Right ventricle myocardium inferior (tissue), 1 donor: ENCODE measurements at regions of chr18 and their contacts with region 1.

Region 1: GRCh38 chr18:3245853-3246634 is 1.6 kb upstream of the MYL12A start:
- DNase-seq: peak; percentile 95
- ATAC-seq: peak; percentile 77

Region 2: GRCh38 chr18:2932247-2933181 is 313.5 kb before region 1 on chr18:
- intact Hi-C with region 1: loop called (anchors 2 kb)
- DNase-seq: no peak
- ATAC-seq: no peak

Region 3: DNA sequence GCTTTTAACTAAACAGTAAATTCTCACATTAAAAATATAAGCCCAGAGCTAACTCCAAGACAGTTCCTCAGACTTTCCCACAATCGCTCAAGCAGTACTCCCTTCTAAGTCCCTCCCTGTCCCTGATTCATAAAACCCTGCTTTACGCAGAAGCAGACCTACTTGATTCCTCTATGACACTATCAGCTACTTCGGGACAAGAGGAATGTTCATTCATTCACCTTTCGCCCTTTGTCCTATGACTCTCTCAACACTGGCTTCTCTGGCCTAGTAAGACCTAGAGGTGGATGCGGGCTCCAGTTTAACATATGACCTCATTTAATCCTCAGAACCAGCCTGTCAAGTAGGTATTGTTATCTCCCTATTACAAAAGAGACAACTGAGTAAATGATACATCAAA is 243.3 kb before region 1 on chr18:
- intact Hi-C with region 1: no loop called
- DNase-seq: no peak
- ATAC-seq: no peak

Region 4: GRCh38 chr18:3012964-3013804 is 232.9 kb before region 1 on chr18 and contains the start of gene LPIN2:
- intact Hi-C with region 1: loop called (anchors 2 kb)
- DNase-seq: peak; percentile 100
- ATAC-seq: peak; percentile 91
- total RNA-seq, gene LPIN2: 9.9 TPM

Region 5: DNA sequence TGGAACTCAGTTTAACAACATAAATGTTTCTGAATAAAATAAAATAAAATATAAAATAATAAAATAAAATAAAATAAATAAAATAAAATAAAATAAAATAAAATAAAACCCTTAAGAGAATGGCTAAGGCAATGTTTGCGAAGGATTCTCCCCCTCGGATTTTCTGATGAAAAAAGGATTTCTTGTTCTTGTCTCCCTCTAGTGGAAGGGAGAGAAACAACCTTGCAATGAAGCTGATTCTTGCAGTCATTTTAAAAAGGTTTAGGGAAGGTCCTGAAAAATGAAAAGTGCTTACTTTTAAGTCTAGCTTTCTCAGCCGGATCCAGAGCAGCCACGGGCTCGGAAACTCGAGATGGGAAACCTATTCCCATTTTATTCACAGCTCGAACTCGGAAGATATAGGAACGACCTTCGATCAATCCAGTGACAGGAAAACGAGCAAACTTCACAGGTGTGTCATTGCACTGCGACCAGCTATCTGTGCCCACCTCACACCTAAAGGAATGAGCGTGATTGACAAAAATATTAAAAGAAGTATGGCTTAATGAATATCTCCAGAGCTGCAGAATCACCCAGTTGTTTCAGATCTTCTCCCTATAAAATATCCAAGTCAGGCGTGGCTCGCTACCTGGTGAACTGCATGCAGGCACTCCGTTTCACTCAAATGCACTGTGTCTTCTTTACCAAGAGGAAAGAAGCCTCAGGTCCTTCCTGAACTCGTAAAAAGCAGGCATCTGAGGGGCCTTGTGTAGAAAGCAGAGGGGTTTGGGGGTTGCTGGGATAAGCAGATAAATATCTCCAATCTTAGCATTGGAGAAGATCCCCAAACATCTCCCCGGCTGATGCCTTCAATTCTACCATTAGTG is 94.4 kb before region 1 on chr18:
- intact Hi-C with region 1: loop called (anchors 5 kb)
- DNase-seq: no peak
- ATAC-seq: no peak

Region 6: GRCh38 chr18:3186678-3187658 is 59.1 kb before region 1 on chr18:
- intact Hi-C with region 1: loop called (anchors 2 kb)
- DNase-seq: no peak
- ATAC-seq: no peak

Region 7: GRCh38 chr18:3217948-3218647 is 27.9 kb before region 1 on chr18:
- intact Hi-C with region 1: loop called (anchors 2 kb)
- DNase-seq: no peak
- ATAC-seq: peak; percentile 58

Region 8: DNA sequence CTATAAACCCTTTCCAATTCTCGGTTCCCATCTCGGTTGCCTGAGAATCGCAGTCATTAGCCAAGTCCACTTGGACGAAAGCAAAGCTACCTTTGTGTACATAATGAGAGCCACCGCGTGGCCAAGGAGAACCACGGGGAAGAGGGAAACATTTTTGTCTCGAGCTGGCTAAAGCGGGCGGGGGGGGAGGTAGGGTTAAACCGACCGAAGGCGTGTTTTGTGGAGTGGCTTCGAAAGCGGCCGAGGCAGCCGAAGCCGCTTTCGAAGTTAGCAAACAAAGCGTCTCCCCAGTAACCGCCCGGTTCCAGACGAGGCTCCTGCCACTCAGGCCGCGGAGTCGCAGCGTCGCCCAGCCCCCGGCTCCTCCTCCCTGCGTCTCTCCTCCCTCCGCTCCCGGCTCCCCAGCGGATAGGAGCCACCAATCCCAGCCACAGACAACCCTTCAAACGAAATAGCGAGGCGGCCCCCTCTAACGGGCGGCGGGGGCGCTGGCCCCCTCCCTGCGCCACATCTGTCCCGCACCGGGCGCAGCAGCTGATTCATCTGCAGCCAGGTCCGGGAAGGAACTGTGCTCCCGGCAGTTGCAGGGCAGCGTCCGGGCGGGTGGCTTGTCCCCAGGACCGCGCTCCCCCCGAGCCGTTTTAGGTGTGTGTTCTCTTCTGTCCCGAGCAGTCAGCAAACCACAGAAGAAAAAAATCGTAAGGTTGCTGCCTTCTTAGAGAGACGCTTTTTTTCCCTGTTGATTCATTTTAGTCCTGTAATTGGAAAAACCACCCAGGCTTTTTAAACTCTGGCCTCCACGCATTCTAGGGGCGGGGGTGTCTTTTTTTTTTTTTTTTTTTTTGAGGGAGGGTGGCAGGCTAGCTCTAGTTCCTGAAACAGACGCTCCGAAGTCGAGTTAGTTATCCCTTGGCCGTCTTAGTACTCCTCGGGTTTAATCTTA is 202.1 kb after region 1 on chr18:
- intact Hi-C with region 1: loop called (anchors 1 kb)
- DNase-seq: peak; percentile 96
- ATAC-seq: peak; percentile 86

Region 9: GRCh38 chr18:3903337-3903736 is 657.3 kb after region 1 on chr18:
- intact Hi-C with region 1: no loop called
- DNase-seq: no peak
- ATAC-seq: no peak